ENCODE measurements at regions of chr2 and their contacts with region 1.

Region 1: GRCh38 chr2:105782123-105782522 is 37.4 kb downstream of the NCK2 start:
- DNase-seq: no peak
- ATAC-seq: no peak
- H3K4me3 Mint-ChIP-seq: peak overlapping the region; percentile 40
- H3K27ac Mint-ChIP-seq: peak overlapping the region; percentile 72
- H3K4me1 Mint-ChIP-seq: peaks cover 90% of the 10 kb centered on the region
- H3K27me3 Mint-ChIP-seq: no peaks in the 10 kb centered on the region

Region 2: GRCh38 chr2:105337124-105338019 is 444.8 kb before region 1 on chr2 and contains the start of gene C2orf49:
- CTCF ChIA-PET with region 1: no interaction called
- POLR2A ChIA-PET with region 1: no interaction called
- DNase-seq: peak; percentile 92
- ATAC-seq: peak; percentile 89
- H3K4me3 Mint-ChIP-seq: peak within 1 kb of the TSS; percentile 100
- H3K27ac Mint-ChIP-seq: peak within 1 kb of the TSS; percentile 100
- H3K4me1 Mint-ChIP-seq: peaks cover 40% of the 10 kb centered on the region
- H3K27me3 Mint-ChIP-seq: no peaks in the 10 kb centered on the region
- total RNA-seq, gene C2orf49: 19.6 to 19.8 TPM

Region 3: DNA sequence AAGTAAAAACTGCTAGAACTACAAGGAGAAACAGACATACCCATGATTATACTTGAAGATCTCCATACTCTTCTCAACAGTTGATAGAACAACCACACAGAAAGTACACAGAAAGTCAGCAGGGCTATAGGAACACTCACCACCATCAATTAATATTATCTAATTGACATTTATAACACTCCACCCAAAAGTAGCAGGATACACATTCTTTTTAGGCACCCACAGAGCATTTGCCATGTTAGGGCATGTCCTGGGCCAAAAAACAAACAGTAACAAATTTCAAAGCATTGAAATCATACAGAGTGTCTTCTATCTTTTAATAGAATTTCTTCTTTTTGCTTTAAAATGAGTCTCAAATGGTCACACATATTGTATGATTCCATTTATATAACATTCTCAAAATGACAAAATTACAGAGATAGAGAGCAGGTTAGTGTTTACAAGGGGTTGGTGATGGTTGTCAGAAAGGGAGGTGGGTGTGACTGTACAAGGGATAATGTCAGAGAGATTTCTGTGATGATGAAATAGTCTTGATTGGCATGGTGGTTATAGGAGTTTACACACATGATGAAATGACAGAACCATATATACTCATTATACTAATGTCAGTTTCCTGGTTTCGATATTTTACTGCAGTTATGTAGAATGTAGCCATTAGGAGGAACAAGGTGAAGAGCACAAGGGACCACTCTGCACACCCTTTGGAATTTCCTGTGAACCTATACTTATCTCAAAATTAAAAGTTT is 45.4 kb after region 1 on chr2:
- CTCF ChIA-PET with region 1: interaction called, 12 read pairs
- POLR2A ChIA-PET with region 1: no interaction called
- DNase-seq: no peak
- ATAC-seq: no peak
- H3K4me3 Mint-ChIP-seq: no peak overlapping the region
- H3K27ac Mint-ChIP-seq: peak overlapping the region; percentile 41
- H3K4me1 Mint-ChIP-seq: peaks cover 77% of the 10 kb centered on the region
- H3K27me3 Mint-ChIP-seq: no peaks in the 10 kb centered on the region

Measured in activated CD8-positive, alpha-beta T cell treated with anti-CD3 and anti-CD28 coated beads, Interleukin-2, amount 10 ng/mL, durations not matched to agents 7 days and 5 days (primary cell).